ENCODE measurements at regions of chr15 and their contacts with region 1.

Region 1: GRCh38 chr15:90539789-90540188 is 10.1 kb downstream of the CRTC3 start:
- DNase-seq: peak in 7 of 9 donors; percentile 66 to 84 (median 79)
- ATAC-seq: peak; percentile 89
- H3K4me3 ChIP-seq: peak overlapping the region; percentile 7
- H3K4me3 Mint-ChIP-seq: peak overlapping the region; percentile 79 to 97 (median 88)
- H3K27ac ChIP-seq: peak overlapping the region; percentile 83
- H3K27ac Mint-ChIP-seq: peak overlapping the region; percentile 94 to 99 (median 97)
- H3K4me1 ChIP-seq: peaks cover 7 to 67% of the 10 kb centered on the region in 2 donors
- H3K4me1 Mint-ChIP-seq: peaks cover 45 to 93% (median 86%) of the 10 kb centered on the region in 7 donors
- H3K27me3 ChIP-seq: no peaks in the 10 kb centered on the region
- H3K27me3 Mint-ChIP-seq: no peaks in the 10 kb centered on the region

Region 2: DNA sequence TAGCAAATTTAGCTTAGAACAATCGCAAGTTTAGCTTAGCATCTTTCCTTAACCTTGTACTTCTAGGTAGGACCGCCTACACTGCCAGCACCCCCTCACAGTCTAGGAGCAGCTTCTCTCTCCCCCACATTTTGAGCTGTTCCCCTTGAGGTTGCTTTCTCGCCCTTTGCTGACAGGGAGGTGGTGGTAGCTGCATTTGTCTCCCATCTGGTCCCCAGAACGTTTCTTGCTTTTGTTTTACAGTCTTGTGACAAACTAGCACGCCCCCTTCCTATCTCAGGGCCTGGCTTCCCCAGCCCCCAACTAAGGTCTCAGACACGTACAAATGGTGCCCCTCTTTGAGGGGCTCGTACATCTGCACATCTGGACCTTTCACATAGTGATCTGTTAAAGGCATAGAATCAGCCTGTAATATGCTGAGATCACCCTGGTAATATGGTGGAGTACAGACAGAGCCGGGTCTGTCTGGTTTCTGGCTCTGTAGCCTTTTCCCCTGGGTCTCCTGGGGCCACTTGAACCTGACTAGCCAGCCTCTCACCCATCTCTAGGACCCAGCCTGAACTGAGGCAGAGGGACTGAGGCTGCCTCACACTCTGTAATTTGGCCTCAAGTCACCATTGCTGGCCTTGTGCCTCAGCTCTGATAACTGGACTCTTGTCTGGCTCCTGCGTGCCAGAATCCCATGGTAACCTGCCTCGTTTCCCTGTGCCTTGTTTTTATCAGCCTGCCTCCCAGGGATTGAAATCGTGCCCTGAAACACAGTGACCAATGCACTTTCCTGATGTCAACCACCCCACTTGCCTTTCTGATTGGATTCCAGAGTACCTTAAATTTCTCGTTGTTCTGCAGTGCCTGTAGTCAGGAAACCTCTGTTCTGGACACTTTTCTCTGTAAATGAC is 17.6 kb after region 1 on chr15:
- CTCF ChIA-PET with region 1: interaction called, 13 read pairs
- POLR2A ChIA-PET with region 1: interaction called, 15 read pairs
- intact Hi-C with region 1: loop called (anchors 1 to 2 kb)
- DNase-seq: peak in 1 of 9 donors; percentile 18
- ATAC-seq: no peak
- H3K4me3 ChIP-seq: no peak overlapping the region
- H3K4me3 Mint-ChIP-seq: peak overlapping the region; percentile 22 to 70 (median 54)
- H3K27ac ChIP-seq: peak overlapping the region; percentile 14
- H3K27ac Mint-ChIP-seq: peak overlapping the region; percentile 57 to 95 (median 86)
- H3K4me1 ChIP-seq: peaks cover 10 to 50% of the 10 kb centered on the region in 2 donors
- H3K4me1 Mint-ChIP-seq: peaks cover 56 to 89% (median 85%) of the 10 kb centered on the region in 7 donors
- H3K27me3 ChIP-seq: no peaks in the 10 kb centered on the region
- H3K27me3 Mint-ChIP-seq: no peaks in the 10 kb centered on the region

Region 3: DNA sequence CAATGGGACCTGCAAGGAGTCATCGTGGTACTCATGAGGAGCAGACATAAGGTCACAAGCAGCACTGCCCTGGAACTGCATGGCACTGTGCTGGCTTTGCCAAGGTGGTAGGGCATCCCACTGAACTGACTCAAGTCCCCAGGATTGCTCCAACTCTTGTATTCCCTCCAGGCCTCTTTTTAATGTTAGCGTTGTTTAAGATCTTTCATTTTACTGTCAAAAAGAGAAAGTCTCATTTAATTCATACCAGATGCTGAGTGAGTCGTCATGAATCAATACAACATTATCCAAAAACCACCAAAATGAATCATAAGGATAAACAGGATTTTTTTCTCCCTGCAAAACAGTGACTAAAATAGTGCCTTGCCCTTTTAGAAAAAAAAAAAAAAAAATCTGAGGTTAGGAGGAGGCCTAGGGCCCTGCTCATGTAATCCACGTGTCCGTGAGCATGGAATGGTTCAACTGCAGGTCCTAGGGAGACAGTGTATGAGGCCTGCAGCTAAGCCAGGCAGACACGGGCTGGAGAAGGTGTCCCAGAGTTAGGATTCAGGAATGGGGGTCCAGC is 140.7 kb after region 1 on chr15:
- CTCF ChIA-PET with region 1: no interaction called
- POLR2A ChIA-PET with region 1: no interaction called
- intact Hi-C with region 1: no loop called
- DNase-seq: no peak
- ATAC-seq: no peak
- H3K4me3 ChIP-seq: no peak overlapping the region
- H3K4me3 Mint-ChIP-seq: peak overlapping the region in 1 of 10 donors; percentile 16
- H3K27ac ChIP-seq: no peak overlapping the region
- H3K27ac Mint-ChIP-seq: no peak overlapping the region
- H3K4me1 ChIP-seq: peaks cover 5 to 21% of the 10 kb centered on the region in 2 donors
- H3K4me1 Mint-ChIP-seq: peaks cover 21 to 63% (median 36%) of the 10 kb centered on the region in 7 donors
- H3K27me3 ChIP-seq: no peaks in the 10 kb centered on the region
- H3K27me3 Mint-ChIP-seq: no peaks in the 10 kb centered on the region